Right ventricle myocardium inferior (tissue), 1 donor: ENCODE measurements at regions of chr6 and their contacts with region 1.

Region 1: DNA sequence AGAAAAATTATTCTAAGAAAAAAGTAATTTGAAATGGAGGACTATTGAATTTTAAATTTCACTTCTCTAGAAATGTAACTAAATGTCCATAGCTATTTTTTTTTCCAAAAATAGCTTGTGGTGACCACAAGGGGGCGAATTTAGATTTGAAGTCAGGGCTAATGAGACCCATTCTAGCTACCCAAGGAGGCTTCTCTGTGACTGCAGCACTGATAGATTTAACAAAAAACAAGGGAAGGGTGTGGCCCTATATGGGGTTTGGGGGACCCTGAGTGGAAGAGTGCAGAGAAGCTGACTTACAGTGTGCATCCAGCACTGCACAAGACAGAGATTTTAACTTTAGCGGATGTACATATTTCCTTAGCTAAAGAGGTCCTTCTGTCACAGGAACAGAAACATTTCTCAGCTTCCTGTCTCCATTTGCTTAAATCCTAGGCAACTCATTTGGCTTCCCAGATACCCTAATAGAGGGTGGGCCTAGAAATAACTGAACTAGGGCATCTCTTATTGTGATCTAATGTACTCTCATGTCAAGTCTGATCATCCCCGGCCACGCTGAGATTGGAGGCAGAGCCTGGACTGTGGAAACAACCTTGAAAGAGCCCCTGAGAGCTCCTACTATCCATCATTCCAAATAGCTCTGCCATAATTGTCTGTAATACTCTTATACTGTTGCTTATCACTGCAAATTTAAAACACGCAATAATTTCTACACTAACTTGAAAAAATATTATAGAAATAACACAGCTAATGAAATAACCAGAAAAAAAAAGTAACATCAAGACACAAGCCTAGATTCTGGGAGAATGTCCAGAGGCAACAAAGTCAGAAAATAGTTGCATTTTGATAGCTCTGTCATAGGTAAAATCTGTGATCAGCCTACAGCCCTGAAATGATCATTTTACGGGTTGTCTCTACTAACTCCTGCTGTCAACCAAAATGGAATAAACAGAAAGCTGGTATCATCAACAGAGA is 93.6 kb downstream of the SNAP91 start:
- DNase-seq: no peak
- ATAC-seq: no peak

Region 2: DNA sequence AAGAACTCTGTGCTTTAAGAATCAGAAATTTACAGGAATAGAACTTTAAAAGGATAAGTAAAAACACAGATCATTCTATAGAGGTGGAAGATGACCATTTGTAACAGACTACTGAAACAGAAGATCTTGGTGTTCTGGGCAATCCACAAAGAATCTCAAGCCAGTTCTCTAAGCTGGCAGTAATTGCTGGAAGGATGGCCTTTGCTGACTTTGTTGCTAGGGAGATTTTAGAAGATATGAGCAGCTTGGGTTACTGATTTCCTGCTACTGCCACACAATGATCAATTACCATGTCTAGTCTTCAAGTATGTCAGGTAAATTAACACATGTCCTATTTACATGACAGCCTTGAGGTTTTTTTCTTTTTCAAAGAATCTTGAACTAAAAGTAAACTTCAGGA is 62.5 kb after region 1 on chr6:
- intact Hi-C with region 1: no loop called
- DNase-seq: no peak
- ATAC-seq: no peak

Region 3: DNA sequence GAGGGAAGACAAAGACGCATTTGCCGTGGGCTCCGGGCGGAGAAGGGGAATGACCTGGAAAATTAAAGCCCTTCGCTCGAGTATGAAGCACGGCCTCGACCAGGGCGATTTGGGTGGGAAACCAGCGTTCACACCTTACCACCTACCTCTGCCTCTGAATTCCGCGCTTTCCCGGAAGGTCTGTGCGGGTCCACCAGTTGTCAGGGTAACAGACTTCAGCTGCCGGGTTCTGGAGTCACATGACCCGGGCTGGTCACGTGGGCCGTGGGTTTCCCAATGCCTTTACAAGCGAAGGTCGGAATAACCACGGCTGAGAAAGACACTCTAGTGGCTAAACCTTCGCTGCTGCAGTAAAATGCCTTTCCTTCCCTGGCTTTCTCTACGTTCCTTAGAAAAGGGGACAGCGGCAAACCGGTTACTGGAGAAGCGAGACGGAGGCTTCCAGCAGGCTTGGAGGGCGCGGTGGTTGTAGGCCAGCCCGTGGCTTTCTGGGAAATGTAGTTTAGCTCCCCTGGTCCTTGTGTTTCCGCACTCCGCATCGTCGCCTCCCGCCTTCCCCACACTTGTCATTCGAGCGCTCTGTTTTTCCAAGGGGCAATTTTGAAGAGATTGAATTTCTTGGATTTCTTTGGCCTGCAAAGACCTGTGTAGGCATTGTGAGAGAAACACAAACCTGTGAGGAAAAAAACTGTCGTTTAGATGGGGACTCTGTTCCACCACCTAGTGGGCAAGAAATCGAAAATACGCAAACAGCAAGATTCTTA is 612.3 kb after region 1 on chr6 and contains the start of gene CEP162:
- intact Hi-C with region 1: loop called (anchors 10 kb)
- DNase-seq: peak; percentile 97
- ATAC-seq: peak; percentile 98
- total RNA-seq, gene CEP162: 3.9 TPM